ENCODE measurements at regions of chr4 and their contacts with region 1.

Region 1: GRCh38 chr4:39134683-39135319 is 47.5 kb upstream of the WDR19 start:
- DNase-seq: no peak
- ATAC-seq: no peak
- H3K4me3 ChIP-seq: no peak overlapping the region
- H3K4me3 Mint-ChIP-seq: no peak overlapping the region
- H3K27ac ChIP-seq: no peak overlapping the region
- H3K27ac Mint-ChIP-seq: peak overlapping the region; percentile 54
- H3K4me1 ChIP-seq: peaks cover 6 to 12% of the 10 kb centered on the region in 2 donors
- H3K4me1 Mint-ChIP-seq: peaks cover 14% of the 10 kb centered on the region
- H3K27me3 ChIP-seq: no peaks in the 10 kb centered on the region
- H3K27me3 Mint-ChIP-seq: no peaks in the 10 kb centered on the region
- CTCF ChIP-seq: no peak

Region 2: GRCh38 chr4:37225778-37226177 is 1909.0 kb before region 1 on chr4:
- CTCF ChIA-PET with region 1: no interaction called
- POLR2A ChIA-PET with region 1: no interaction called
- intact Hi-C with region 1: no loop called
- DNase-seq: no peak
- ATAC-seq: no peak
- H3K4me3 ChIP-seq: no peak overlapping the region
- H3K4me3 Mint-ChIP-seq: no peak overlapping the region
- H3K27ac ChIP-seq: no peak overlapping the region
- H3K27ac Mint-ChIP-seq: no peak overlapping the region
- H3K4me1 ChIP-seq: no peaks in the 10 kb centered on the region
- H3K4me1 Mint-ChIP-seq: no peaks in the 10 kb centered on the region
- H3K27me3 ChIP-seq: no peaks in the 10 kb centered on the region
- H3K27me3 Mint-ChIP-seq: no peaks in the 10 kb centered on the region
- CTCF ChIP-seq: no peak

Region 3: GRCh38 chr4:38574559-38575333 is 560.1 kb before region 1 on chr4:
- CTCF ChIA-PET with region 1: no interaction called
- POLR2A ChIA-PET with region 1: no interaction called
- intact Hi-C with region 1: no loop called
- DNase-seq: no peak
- ATAC-seq: no peak
- H3K4me3 ChIP-seq: no peak overlapping the region
- H3K4me3 Mint-ChIP-seq: no peak overlapping the region
- H3K27ac ChIP-seq: no peak overlapping the region
- H3K27ac Mint-ChIP-seq: no peak overlapping the region
- H3K4me1 ChIP-seq: no peaks in the 10 kb centered on the region
- H3K4me1 Mint-ChIP-seq: peaks cover 2% of the 10 kb centered on the region
- H3K27me3 ChIP-seq: no peaks in the 10 kb centered on the region
- H3K27me3 Mint-ChIP-seq: peaks cover 13% of the 10 kb centered on the region
- CTCF ChIP-seq: no peak

Region 4: GRCh38 chr4:38856524-38857337 is 278.1 kb before region 1 on chr4 and contains the start of gene TLR6:
- CTCF ChIA-PET with region 1: interaction called, 12 read pairs
- POLR2A ChIA-PET with region 1: no interaction called
- intact Hi-C with region 1: no loop called
- DNase-seq: peak; percentile 87
- ATAC-seq: peak; percentile 56
- H3K4me3 ChIP-seq: peak within 1 kb of the TSS; percentile 51 to 78 (median 70)
- H3K4me3 Mint-ChIP-seq: peak within 1 kb of the TSS; percentile 93
- H3K27ac ChIP-seq: peak within 1 kb of the TSS; percentile 73 to 77
- H3K27ac Mint-ChIP-seq: peak within 1 kb of the TSS; percentile 94
- H3K4me1 ChIP-seq: peaks cover 39 to 43% of the 10 kb centered on the region in 2 donors
- H3K4me1 Mint-ChIP-seq: peaks cover 52% of the 10 kb centered on the region
- H3K27me3 ChIP-seq: no peaks in the 10 kb centered on the region
- H3K27me3 Mint-ChIP-seq: no peaks in the 10 kb centered on the region
- CTCF ChIP-seq: peak; percentile 87
- total RNA-seq, gene TLR6: 54.4 and 60.6 TPM in 2 replicates

Region 5: DNA sequence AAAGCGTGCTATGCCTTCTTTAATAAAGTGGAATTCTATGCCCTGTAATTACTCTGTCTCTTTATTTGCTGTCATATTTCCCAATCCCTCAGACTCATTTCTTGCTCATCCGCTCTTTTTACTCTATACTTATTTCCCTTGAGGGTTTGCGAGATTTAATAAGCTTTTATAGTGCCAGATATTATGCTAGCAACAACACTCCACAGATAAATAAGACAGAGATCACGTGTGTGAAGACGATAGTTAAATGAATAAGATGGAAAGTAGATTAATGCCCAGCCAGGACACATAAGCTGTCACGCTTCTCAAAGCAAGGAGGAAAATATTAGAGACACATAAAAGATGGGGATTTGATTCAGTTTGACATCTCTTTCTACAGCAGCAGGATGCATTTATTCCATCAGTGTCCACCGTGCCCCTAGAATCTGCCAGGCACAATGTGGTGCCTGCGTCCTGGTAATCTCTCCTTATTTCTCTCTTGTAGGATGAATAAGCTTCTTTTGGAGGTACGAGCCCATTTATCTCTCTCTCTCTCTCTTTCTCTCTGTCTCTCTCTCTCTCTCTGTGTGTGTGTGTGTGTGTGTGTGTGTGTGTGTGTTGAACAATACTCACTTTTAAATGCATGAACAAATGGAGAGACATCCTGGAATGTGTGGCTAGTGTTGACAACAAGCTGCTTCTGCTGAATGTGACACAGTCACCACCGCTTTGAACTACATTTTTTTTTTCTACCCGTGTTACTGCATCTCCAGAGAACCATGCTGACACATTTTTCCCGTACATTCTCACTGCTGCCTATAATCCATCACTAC is 150.8 kb before region 1 on chr4:
- CTCF ChIA-PET with region 1: interaction called, 10 read pairs
- POLR2A ChIA-PET with region 1: no interaction called
- intact Hi-C with region 1: no loop called
- DNase-seq: no peak
- ATAC-seq: no peak
- H3K4me3 ChIP-seq: no peak overlapping the region
- H3K4me3 Mint-ChIP-seq: peak overlapping the region; percentile 21
- H3K27ac ChIP-seq: peak overlapping the region in 1 of 2 donors; percentile 86
- H3K27ac Mint-ChIP-seq: peak overlapping the region; percentile 42
- H3K4me1 ChIP-seq: peaks cover 35 to 37% of the 10 kb centered on the region in 2 donors
- H3K4me1 Mint-ChIP-seq: peaks cover 53% of the 10 kb centered on the region
- H3K27me3 ChIP-seq: no peaks in the 10 kb centered on the region
- H3K27me3 Mint-ChIP-seq: no peaks in the 10 kb centered on the region
- CTCF ChIP-seq: no peak

Region 6: DNA sequence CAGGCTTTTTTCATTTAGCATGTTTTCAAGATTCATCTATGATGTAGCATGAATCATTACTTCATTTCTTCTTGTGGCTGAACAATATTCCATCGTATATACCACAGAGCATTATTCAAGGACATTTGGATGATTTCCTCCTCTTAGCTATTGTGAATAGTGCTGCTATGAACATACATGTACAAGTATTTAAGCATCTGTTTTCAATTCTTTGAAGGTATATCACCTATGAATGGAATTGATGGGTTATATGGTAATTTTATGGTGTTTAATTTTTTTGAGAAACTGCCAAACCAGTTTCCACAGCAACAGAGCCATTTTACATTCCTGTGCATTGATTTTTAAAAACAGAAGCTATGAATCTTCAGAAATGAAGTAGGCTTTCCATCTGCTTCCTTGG is 11.4 kb after region 1 on chr4:
- CTCF ChIA-PET with region 1: interaction called, 17 read pairs
- POLR2A ChIA-PET with region 1: interaction called, 4 read pairs
- intact Hi-C with region 1: no loop called
- DNase-seq: no peak
- ATAC-seq: no peak
- H3K4me3 ChIP-seq: no peak overlapping the region
- H3K4me3 Mint-ChIP-seq: no peak overlapping the region
- H3K27ac ChIP-seq: no peak overlapping the region
- H3K27ac Mint-ChIP-seq: no peak overlapping the region
- H3K4me1 ChIP-seq: peaks cover 0 to 4% of the 10 kb centered on the region in 2 donors
- H3K4me1 Mint-ChIP-seq: peaks cover 3% of the 10 kb centered on the region
- H3K27me3 ChIP-seq: no peaks in the 10 kb centered on the region
- H3K27me3 Mint-ChIP-seq: no peaks in the 10 kb centered on the region
- CTCF ChIP-seq: no peak

Region 7: GRCh38 chr4:39181905-39182638 is 47.3 kb after region 1 on chr4 and contains the start of gene WDR19:
- CTCF ChIA-PET with region 1: interaction called, 8 read pairs
- POLR2A ChIA-PET with region 1: no interaction called
- intact Hi-C with region 1: loop called (anchors 5 kb)
- DNase-seq: peak; percentile 99
- ATAC-seq: peak; percentile 96
- H3K4me3 ChIP-seq: peak within 1 kb of the TSS; percentile 76 to 99 (median 94)
- H3K4me3 Mint-ChIP-seq: peak within 1 kb of the TSS; percentile 47
- H3K27ac ChIP-seq: peak within 1 kb of the TSS; percentile 12 to 79
- H3K27ac Mint-ChIP-seq: no peak within 1 kb of the TSS
- H3K4me1 ChIP-seq: peaks cover 12 to 16% of the 10 kb centered on the region in 2 donors
- H3K4me1 Mint-ChIP-seq: peaks cover 8% of the 10 kb centered on the region
- H3K27me3 ChIP-seq: no peaks in the 10 kb centered on the region
- H3K27me3 Mint-ChIP-seq: no peaks in the 10 kb centered on the region
- CTCF ChIP-seq: peak; percentile 73
- total RNA-seq, gene WDR19: 79.8 and 83.2 TPM in 2 replicates

Region 8: DNA sequence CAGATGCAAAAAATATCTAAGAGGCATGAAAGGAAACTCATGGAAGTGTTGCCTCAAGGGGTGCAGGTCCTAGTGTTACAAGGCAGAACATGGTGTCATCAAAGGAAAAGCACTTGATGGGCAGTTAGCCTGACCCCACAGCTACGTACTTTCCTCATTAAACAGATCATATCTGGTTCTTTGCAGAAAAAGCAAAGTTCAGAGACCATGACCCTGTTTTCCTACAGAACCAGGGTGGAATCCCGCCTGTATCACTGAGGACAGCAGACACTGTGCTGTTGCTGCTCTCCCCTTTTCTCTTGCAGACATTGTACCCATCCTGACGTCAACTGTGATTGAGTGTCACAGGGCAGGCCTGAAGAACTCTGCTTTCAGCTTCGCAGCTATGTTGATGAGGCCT is 139.7 kb after region 1 on chr4:
- CTCF ChIA-PET with region 1: no interaction called
- POLR2A ChIA-PET with region 1: no interaction called
- intact Hi-C with region 1: no loop called
- DNase-seq: no peak
- ATAC-seq: no peak
- H3K4me3 ChIP-seq: no peak overlapping the region
- H3K4me3 Mint-ChIP-seq: no peak overlapping the region
- H3K27ac ChIP-seq: no peak overlapping the region
- H3K27ac Mint-ChIP-seq: no peak overlapping the region
- H3K4me1 ChIP-seq: no peaks in the 10 kb centered on the region
- H3K4me1 Mint-ChIP-seq: no peaks in the 10 kb centered on the region
- H3K27me3 ChIP-seq: no peaks in the 10 kb centered on the region
- H3K27me3 Mint-ChIP-seq: no peaks in the 10 kb centered on the region
- CTCF ChIP-seq: no peak

Region 9: GRCh38 chr4:39908284-39908683 is 773.5 kb after region 1 on chr4:
- CTCF ChIA-PET with region 1: no interaction called
- POLR2A ChIA-PET with region 1: no interaction called
- intact Hi-C with region 1: no loop called
- DNase-seq: no peak
- ATAC-seq: no peak
- H3K4me3 ChIP-seq: no peak overlapping the region
- H3K4me3 Mint-ChIP-seq: no peak overlapping the region
- H3K27ac ChIP-seq: no peak overlapping the region
- H3K27ac Mint-ChIP-seq: no peak overlapping the region
- H3K4me1 ChIP-seq: no peaks in the 10 kb centered on the region
- H3K4me1 Mint-ChIP-seq: no peaks in the 10 kb centered on the region
- H3K27me3 ChIP-seq: no peaks in the 10 kb centered on the region
- H3K27me3 Mint-ChIP-seq: no peaks in the 10 kb centered on the region
- CTCF ChIP-seq: no peak